Naive thymus-derived CD4-positive, alpha-beta T cell (primary cell): ENCODE measurements at regions of chr3 and their contacts with region 1.

Region 1: GRCh38 chr3:43162230-43163084 is 56.6 kb upstream of the POMGNT2 start:
- DNase-seq: peak in 8 of 9 donors; percentile 35 to 82 (median 76)
- ATAC-seq: peak; percentile 85
- H3K4me3 ChIP-seq: peak overlapping the region; percentile 19
- H3K4me3 Mint-ChIP-seq: peak overlapping the region; percentile 68 to 91 (median 82)
- H3K27ac ChIP-seq: peak overlapping the region; percentile 74
- H3K27ac Mint-ChIP-seq: peak overlapping the region; percentile 83 to 100 (median 98)
- H3K4me1 ChIP-seq: peaks cover 22 to 26% of the 10 kb centered on the region in 2 donors
- H3K4me1 Mint-ChIP-seq: peaks cover 16 to 37% (median 30%) of the 10 kb centered on the region in 7 donors
- H3K27me3 ChIP-seq: no peaks in the 10 kb centered on the region
- H3K27me3 Mint-ChIP-seq: peaks cover 0 to 2% (median 0%) of the 10 kb centered on the region in 5 donors

Region 2: DNA sequence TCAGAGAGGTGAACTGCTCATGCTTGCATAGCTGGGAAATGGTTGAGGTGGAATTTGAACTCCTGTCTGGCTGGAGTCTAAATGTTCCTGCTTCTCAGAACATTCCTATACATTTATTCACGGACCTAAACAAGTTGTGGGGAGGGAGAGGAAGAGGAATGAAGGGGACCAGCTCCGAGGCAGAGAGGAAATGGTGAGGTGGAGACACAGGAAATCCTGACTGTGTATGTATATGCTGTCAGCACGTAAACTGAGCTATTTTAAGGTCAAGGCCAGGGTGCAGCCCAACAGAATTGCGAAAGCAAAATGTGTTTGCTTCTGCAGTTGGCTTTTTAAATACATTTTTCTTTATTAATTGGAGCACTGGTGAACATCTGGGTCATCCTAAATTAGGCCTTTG is 17.6 kb after region 1 on chr3:
- CTCF ChIA-PET with region 1: interaction called, 23 read pairs
- POLR2A ChIA-PET with region 1: interaction called, 26 read pairs
- intact Hi-C with region 1: loop called (anchors 1 kb)
- DNase-seq: peak in 7 of 9 donors; percentile 38 to 66 (median 61)
- ATAC-seq: peak; percentile 86
- H3K4me3 ChIP-seq: peak overlapping the region; percentile 37
- H3K4me3 Mint-ChIP-seq: peak overlapping the region; percentile 66 to 82 (median 79)
- H3K27ac ChIP-seq: peak overlapping the region; percentile 50
- H3K27ac Mint-ChIP-seq: peak overlapping the region; percentile 82 to 97 (median 93)
- H3K4me1 ChIP-seq: peaks cover 32 to 41% of the 10 kb centered on the region in 2 donors
- H3K4me1 Mint-ChIP-seq: peaks cover 47 to 76% (median 71%) of the 10 kb centered on the region in 7 donors
- H3K27me3 ChIP-seq: no peaks in the 10 kb centered on the region
- H3K27me3 Mint-ChIP-seq: no peaks in the 10 kb centered on the region

Region 3: DNA sequence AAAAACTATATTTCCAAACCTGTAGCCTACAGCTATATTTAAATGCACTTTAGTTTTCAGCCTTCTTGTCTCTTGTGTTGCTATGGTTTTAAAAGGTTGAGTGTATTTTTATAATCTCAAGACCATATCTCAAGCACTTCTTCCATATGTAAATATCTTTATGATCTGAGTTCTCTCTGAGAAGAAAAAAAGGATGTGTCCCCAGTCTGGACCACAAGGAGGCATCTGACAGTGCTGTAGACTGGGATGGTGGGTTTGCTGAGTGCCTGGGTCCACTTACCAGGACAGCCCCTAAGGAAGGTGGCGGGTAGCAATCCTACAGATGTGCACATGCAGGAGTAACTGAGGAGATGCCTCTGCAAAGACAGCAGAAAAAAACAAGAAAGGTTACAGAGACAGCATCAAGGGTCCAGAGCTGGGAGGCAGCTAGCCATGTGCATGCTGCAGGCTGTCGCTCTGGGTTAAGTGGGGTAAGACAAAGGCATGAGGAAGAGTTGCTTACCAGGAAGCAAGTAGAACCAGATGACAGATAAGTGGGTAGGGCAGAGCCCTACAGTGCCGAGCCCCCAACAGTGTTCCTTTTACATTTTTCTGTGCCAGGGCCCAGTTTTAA is 53.3 kb after region 1 on chr3:
- CTCF ChIA-PET with region 1: interaction called, 50 read pairs
- POLR2A ChIA-PET with region 1: interaction called, 37 read pairs
- intact Hi-C with region 1: loop called in 1 of 2 experiments (anchors 1 kb)
- DNase-seq: peak in 2 of 9 donors; percentile 24 to 31
- ATAC-seq: no peak
- H3K4me3 ChIP-seq: no peak overlapping the region
- H3K4me3 Mint-ChIP-seq: peak overlapping the region in 7 of 10 donors; percentile 34 to 71 (median 59)
- H3K27ac ChIP-seq: no peak overlapping the region
- H3K27ac Mint-ChIP-seq: peak overlapping the region in 8 of 9 donors; percentile 63 to 91 (median 79)
- H3K4me1 ChIP-seq: peaks cover 0 to 43% of the 10 kb centered on the region in 2 donors
- H3K4me1 Mint-ChIP-seq: peaks cover 22 to 64% (median 58%) of the 10 kb centered on the region in 7 donors
- H3K27me3 ChIP-seq: no peaks in the 10 kb centered on the region
- H3K27me3 Mint-ChIP-seq: peaks cover 0 to 10% (median 0%) of the 10 kb centered on the region in 5 donors

Region 4: GRCh38 chr3:43296565-43296964 is 134.1 kb after region 1 on chr3:
- CTCF ChIA-PET with region 1: interaction called, 22 read pairs
- POLR2A ChIA-PET with region 1: interaction called, 33 read pairs
- intact Hi-C with region 1: loop called (anchors 1 to 2 kb)
- DNase-seq: peak in 8 of 9 donors; percentile 51 to 93 (median 86)
- ATAC-seq: peak; percentile 95
- H3K4me3 ChIP-seq: peak overlapping the region; percentile 53
- H3K4me3 Mint-ChIP-seq: peak overlapping the region; percentile 81 to 99 (median 87)
- H3K27ac ChIP-seq: peak overlapping the region; percentile 89
- H3K27ac Mint-ChIP-seq: peak overlapping the region; percentile 92 to 99 (median 96)
- H3K4me1 ChIP-seq: peaks cover 76 to 78% of the 10 kb centered on the region in 2 donors
- H3K4me1 Mint-ChIP-seq: peaks cover 46 to 97% (median 83%) of the 10 kb centered on the region in 7 donors
- H3K27me3 ChIP-seq: no peaks in the 10 kb centered on the region
- H3K27me3 Mint-ChIP-seq: no peaks in the 10 kb centered on the region

Region 5: GRCh38 chr3:43389388-43390254 is 227.2 kb after region 1 on chr3:
- CTCF ChIA-PET with region 1: interaction called, 13 read pairs
- POLR2A ChIA-PET with region 1: interaction called, 4 read pairs
- intact Hi-C with region 1: no loop called
- DNase-seq: peak in 8 of 9 donors; percentile 58 to 91 (median 85)
- ATAC-seq: peak; percentile 98
- H3K4me3 ChIP-seq: peak overlapping the region; percentile 18
- H3K4me3 Mint-ChIP-seq: peak overlapping the region in 9 of 10 donors; percentile 48 to 81 (median 60)
- H3K27ac ChIP-seq: peak overlapping the region; percentile 50
- H3K27ac Mint-ChIP-seq: peak overlapping the region; percentile 85 to 97 (median 94)
- H3K4me1 ChIP-seq: peaks cover 30 to 39% of the 10 kb centered on the region in 2 donors
- H3K4me1 Mint-ChIP-seq: peaks cover 40 to 83% (median 70%) of the 10 kb centered on the region in 7 donors
- H3K27me3 ChIP-seq: no peaks in the 10 kb centered on the region
- H3K27me3 Mint-ChIP-seq: peaks cover 0 to 12% (median 0%) of the 10 kb centered on the region in 5 donors

Region 6: GRCh38 chr3:43638594-43639447 is 476.4 kb after region 1 on chr3:
- CTCF ChIA-PET with region 1: no interaction called
- POLR2A ChIA-PET with region 1: no interaction called
- intact Hi-C with region 1: loop called (anchors 1 kb)
- DNase-seq: peak in 3 of 9 donors; percentile 7 to 12 (median 8)
- ATAC-seq: peak; percentile 45
- H3K4me3 ChIP-seq: no peak overlapping the region
- H3K4me3 Mint-ChIP-seq: no peak overlapping the region
- H3K27ac ChIP-seq: no peak overlapping the region
- H3K27ac Mint-ChIP-seq: no peak overlapping the region
- H3K4me1 ChIP-seq: no peaks in the 10 kb centered on the region
- H3K4me1 Mint-ChIP-seq: peaks cover 0 to 8% (median 0%) of the 10 kb centered on the region in 7 donors
- H3K27me3 ChIP-seq: no peaks in the 10 kb centered on the region
- H3K27me3 Mint-ChIP-seq: peaks cover 5 to 10% (median 7%) of the 10 kb centered on the region in 5 donors